HCT116 (cell line): ENCODE measurements at regions of chr10 and their contacts with region 1.

Region 1: GRCh38 chr10:112140110-112140970 is 43.2 kb downstream of the GPAM start:
- DNase-seq: peak; percentile 95
- ATAC-seq: peak; percentile 96
- H3K4me3 ChIP-seq: peak overlapping the region; percentile 11 to 13; a peak in 2 of 4 replicates
- H3K27ac ChIP-seq: no peak overlapping the region
- H3K4me1 ChIP-seq: peaks cover 2 to 15% of the 10 kb centered on the region in 2 experiments; a peak in 3 of 4 replicates
- H3K27me3 ChIP-seq: no peaks in the 10 kb centered on the region
- CTCF ChIP-seq: peak; percentile 99 to 100 (median 99)
- POLR2A ChIP-seq: no peak
- RAD21 ChIP-seq: peak; percentile 96

Region 2: GRCh38 chr10:110304780-110305421 is 1835.4 kb before region 1 on chr10 and contains the start of gene SMNDC1:
- CTCF ChIA-PET with region 1: no interaction called
- POLR2A ChIA-PET with region 1: no interaction called
- RAD21 ChIA-PET with region 1: no interaction called
- intact Hi-C with region 1: loop called (anchors 5 kb)
- DNase-seq: peak; percentile 99
- ATAC-seq: peak; percentile 94
- H3K4me3 ChIP-seq: peak within 1 kb of the TSS; percentile 88 to 91
- H3K27ac ChIP-seq: peak within 1 kb of the TSS; percentile 77
- H3K4me1 ChIP-seq: peaks cover 12 to 26% of the 10 kb centered on the region in 2 experiments; a peak in 3 of 4 replicates
- H3K27me3 ChIP-seq: no peaks in the 10 kb centered on the region
- CTCF ChIP-seq: no peak
- POLR2A ChIP-seq: peak; percentile 77
- RAD21 ChIP-seq: no peak
- total RNA-seq, gene SMNDC1: 61.7 TPM

Region 3: GRCh38 chr10:112026438-112026837 is 113.9 kb before region 1 on chr10:
- CTCF ChIA-PET with region 1: interaction called, 18 read pairs
- POLR2A ChIA-PET with region 1: no interaction called
- RAD21 ChIA-PET with region 1: no interaction called
- intact Hi-C with region 1: loop called (anchors 1 kb)
- DNase-seq: peak; percentile 26
- ATAC-seq: peak; percentile 87
- H3K4me3 ChIP-seq: no peak overlapping the region
- H3K27ac ChIP-seq: no peak overlapping the region
- H3K4me1 ChIP-seq: no peaks in the 10 kb centered on the region
- H3K27me3 ChIP-seq: peaks cover 3% of the 10 kb centered on the region; the same call in 1 of the 2 replicates
- CTCF ChIP-seq: peak; percentile 43 to 71 (median 56); a peak in 5 of 6 replicates
- POLR2A ChIP-seq: no peak
- RAD21 ChIP-seq: peak; percentile 47

Region 4: GRCh38 chr10:112122827-112123226 is 17.5 kb before region 1 on chr10:
- CTCF ChIA-PET with region 1: interaction called, 62 read pairs
- POLR2A ChIA-PET with region 1: no interaction called
- RAD21 ChIA-PET with region 1: no interaction called
- intact Hi-C with region 1: no loop called
- DNase-seq: no peak
- ATAC-seq: no peak
- H3K4me3 ChIP-seq: no peak overlapping the region
- H3K27ac ChIP-seq: no peak overlapping the region
- H3K4me1 ChIP-seq: no peaks in the 10 kb centered on the region
- H3K27me3 ChIP-seq: peaks cover 31% of the 10 kb centered on the region; the same call in 1 of the 2 replicates
- CTCF ChIP-seq: no peak
- POLR2A ChIP-seq: no peak
- RAD21 ChIP-seq: no peak

Region 5: DNA sequence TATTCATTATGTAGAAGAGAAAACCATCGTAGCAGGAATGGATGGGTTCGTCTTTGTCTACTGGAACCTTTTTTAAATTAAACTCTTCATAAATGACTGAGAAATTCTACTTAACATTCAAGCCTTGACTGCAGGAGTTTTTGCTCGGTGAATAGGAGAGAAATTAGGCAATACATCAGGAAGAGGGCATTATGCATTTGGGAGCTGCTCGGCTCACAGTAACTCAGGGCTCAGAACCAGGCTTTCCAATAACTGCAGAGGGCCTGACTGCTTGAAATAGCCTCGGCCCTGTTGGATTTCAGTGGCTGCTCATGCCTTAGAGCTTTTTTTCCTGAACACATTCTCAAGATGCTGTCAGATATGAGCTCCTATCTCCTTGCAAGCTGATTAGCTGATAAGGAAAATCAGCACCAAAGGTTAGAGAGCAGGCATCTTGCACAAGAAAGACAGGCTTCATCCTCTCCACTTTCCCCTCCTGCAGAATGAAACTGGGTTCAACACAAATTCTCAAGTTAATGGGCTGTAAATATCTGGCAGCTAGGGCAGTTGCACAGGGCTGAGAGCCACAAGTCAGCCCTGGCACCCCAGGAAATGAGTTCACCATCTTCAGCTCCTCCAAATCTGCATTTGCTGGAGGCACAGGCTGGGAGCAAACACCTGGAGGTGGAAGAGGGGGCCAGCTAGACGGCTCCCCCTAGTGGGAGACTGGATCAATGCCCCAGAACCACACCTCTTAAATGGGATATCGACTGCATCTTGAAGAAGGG is 167.2 kb after region 1 on chr10:
- CTCF ChIA-PET with region 1: interaction called, 31 read pairs
- POLR2A ChIA-PET with region 1: no interaction called
- RAD21 ChIA-PET with region 1: no interaction called
- intact Hi-C with region 1: loop called (anchors 1 kb)
- DNase-seq: peak; percentile 59
- ATAC-seq: peak; percentile 97
- H3K4me3 ChIP-seq: no peak overlapping the region
- H3K27ac ChIP-seq: no peak overlapping the region
- H3K4me1 ChIP-seq: peaks cover 0 to 6% of the 10 kb centered on the region in 2 experiments; a peak in 2 of 4 replicates
- H3K27me3 ChIP-seq: no peaks in the 10 kb centered on the region
- CTCF ChIP-seq: peak; percentile 80 to 100 (median 99); a peak in 5 of 6 replicates
- POLR2A ChIP-seq: no peak
- RAD21 ChIP-seq: peak; percentile 84